ENCODE measurements at regions of chr12 and their contacts with region 1.

Region 1: DNA sequence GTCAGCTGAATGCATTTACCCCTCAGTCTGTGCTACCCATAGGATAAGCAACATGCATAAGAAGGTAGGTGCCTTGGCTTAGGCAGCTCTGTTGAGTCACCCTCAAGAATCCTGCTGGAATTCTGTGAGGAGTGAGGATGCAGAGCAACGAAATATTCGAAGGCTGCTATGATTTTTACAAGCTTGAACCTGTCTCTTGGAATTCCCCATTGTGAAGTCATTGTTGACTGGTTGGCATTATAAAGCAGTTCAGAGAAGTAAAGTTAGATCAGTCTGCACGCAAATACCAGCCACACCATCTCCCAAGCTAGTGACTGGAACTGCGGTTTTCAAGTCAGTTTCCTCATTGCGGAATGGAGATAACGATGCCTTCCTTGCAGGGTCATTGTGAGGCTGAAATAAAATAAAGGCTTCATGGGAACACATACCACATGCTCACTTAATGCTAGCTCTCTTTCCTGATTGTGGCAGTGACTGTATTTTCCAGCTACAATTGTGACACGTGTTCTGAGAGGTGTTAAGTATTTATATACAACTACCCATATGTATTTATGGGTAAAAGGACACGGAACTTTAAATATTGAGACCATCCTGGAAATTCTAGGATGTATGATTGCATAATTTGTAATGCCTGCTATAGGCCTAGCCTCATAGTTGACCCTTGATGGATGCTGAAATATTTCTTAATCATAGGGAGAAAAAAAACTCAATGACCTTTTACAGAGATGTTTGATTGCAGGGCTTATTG is 96.7 kb downstream of the ETV6 start:
- DNase-seq: peak; percentile 76
- H3K4me3 Mint-ChIP-seq: no peak overlapping the region
- H3K27ac Mint-ChIP-seq: peak overlapping the region; percentile 91
- H3K4me1 Mint-ChIP-seq: peaks cover 77% of the 10 kb centered on the region
- H3K27me3 Mint-ChIP-seq: no peaks in the 10 kb centered on the region
- CTCF ChIP-seq: no peak

Region 2: GRCh38 chr12:11705010-11705409 is 41.2 kb before region 1 on chr12:
- CTCF ChIA-PET with region 1: no interaction called
- intact Hi-C with region 1: loop called (anchors 5 kb)
- DNase-seq: peak; percentile 52
- H3K4me3 Mint-ChIP-seq: no peak overlapping the region
- H3K27ac Mint-ChIP-seq: peak overlapping the region; percentile 74
- H3K4me1 Mint-ChIP-seq: peaks cover 94% of the 10 kb centered on the region
- H3K27me3 Mint-ChIP-seq: no peaks in the 10 kb centered on the region
- CTCF ChIP-seq: no peak

Region 3: GRCh38 chr12:11730299-11731041 is 15.7 kb before region 1 on chr12:
- CTCF ChIA-PET with region 1: interaction called, 6 read pairs
- intact Hi-C with region 1: loop called (anchors 1 kb)
- DNase-seq: peak; percentile 81
- H3K4me3 Mint-ChIP-seq: peak overlapping the region; percentile 58
- H3K27ac Mint-ChIP-seq: peak overlapping the region; percentile 98
- H3K4me1 Mint-ChIP-seq: peaks cover 60% of the 10 kb centered on the region
- H3K27me3 Mint-ChIP-seq: no peaks in the 10 kb centered on the region
- CTCF ChIP-seq: no peak

Region 4: GRCh38 chr12:11798856-11799501 is 52.8 kb after region 1 on chr12:
- CTCF ChIA-PET with region 1: interaction called, 10 read pairs
- intact Hi-C with region 1: loop called (anchors 5 kb)
- DNase-seq: no peak
- H3K4me3 Mint-ChIP-seq: no peak overlapping the region
- H3K27ac Mint-ChIP-seq: peak overlapping the region; percentile 96
- H3K4me1 Mint-ChIP-seq: peaks cover 56% of the 10 kb centered on the region
- H3K27me3 Mint-ChIP-seq: no peaks in the 10 kb centered on the region
- CTCF ChIP-seq: no peak

Region 5: GRCh38 chr12:11877869-11878780 is 131.9 kb after region 1 on chr12:
- CTCF ChIA-PET with region 1: no interaction called
- intact Hi-C with region 1: loop called (anchors 5 kb)
- DNase-seq: peak; percentile 50
- H3K4me3 Mint-ChIP-seq: peak overlapping the region; percentile 49
- H3K27ac Mint-ChIP-seq: peak overlapping the region; percentile 97
- H3K4me1 Mint-ChIP-seq: peaks cover 78% of the 10 kb centered on the region
- H3K27me3 Mint-ChIP-seq: no peaks in the 10 kb centered on the region
- CTCF ChIP-seq: no peak

Measured in Calu3 (cell line).